Transverse colon (tissue), 4 donors: ENCODE measurements at regions of chr7 and their contacts with region 1.

Region 1: DNA sequence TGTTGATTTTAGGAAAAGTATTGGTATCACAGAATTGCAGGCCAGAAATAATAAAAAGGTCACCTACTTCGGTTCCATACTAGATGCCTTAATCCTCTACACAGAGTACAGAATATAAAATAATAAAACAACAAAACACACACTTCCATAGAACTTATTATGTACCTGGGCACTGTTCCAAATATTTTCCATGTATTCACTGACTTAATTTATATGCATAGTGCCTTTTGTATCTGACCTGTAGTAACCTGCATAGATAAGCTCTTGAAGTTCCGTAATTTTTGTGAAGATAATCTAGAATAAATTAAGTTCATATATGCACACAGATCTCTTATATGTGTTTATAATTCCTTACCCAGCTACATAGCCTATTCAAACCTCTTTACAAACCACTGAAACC is 78.3 kb downstream of the RAPGEF5 start:
- DNase-seq: no peak
- H3K4me3 ChIP-seq: no peak overlapping the region
- H3K27ac ChIP-seq: no peak overlapping the region
- H3K4me1 ChIP-seq: no peaks in the 10 kb centered on the region
- H3K27me3 ChIP-seq: no peaks in the 10 kb centered on the region
- CTCF ChIP-seq: no peak
- EP300 ChIP-seq: no peak
- POLR2A ChIP-seq: no peak

Region 2: GRCh38 chr7:21293771-21294170 is 984.9 kb before region 1 on chr7:
- in situ Hi-C with region 1: no loop called
- intact Hi-C with region 1: loop called (anchors 5 kb)
- DNase-seq: no peak
- H3K4me3 ChIP-seq: no peak overlapping the region
- H3K27ac ChIP-seq: no peak overlapping the region
- H3K4me1 ChIP-seq: no peaks in the 10 kb centered on the region
- H3K27me3 ChIP-seq: peaks cover 2% of the 10 kb centered on the region
- CTCF ChIP-seq: no peak
- EP300 ChIP-seq: no peak
- POLR2A ChIP-seq: no peak